Dendritic cell treated with granulocyte-macrophage colony-stimulating factor and Interleukin-4, amounts not matched to agents 40 ng/mL and 50 ng/mL, for 4 days (primary cell): ENCODE measurements at regions of chr4 and their contacts with region 1.

Region 1: DNA sequence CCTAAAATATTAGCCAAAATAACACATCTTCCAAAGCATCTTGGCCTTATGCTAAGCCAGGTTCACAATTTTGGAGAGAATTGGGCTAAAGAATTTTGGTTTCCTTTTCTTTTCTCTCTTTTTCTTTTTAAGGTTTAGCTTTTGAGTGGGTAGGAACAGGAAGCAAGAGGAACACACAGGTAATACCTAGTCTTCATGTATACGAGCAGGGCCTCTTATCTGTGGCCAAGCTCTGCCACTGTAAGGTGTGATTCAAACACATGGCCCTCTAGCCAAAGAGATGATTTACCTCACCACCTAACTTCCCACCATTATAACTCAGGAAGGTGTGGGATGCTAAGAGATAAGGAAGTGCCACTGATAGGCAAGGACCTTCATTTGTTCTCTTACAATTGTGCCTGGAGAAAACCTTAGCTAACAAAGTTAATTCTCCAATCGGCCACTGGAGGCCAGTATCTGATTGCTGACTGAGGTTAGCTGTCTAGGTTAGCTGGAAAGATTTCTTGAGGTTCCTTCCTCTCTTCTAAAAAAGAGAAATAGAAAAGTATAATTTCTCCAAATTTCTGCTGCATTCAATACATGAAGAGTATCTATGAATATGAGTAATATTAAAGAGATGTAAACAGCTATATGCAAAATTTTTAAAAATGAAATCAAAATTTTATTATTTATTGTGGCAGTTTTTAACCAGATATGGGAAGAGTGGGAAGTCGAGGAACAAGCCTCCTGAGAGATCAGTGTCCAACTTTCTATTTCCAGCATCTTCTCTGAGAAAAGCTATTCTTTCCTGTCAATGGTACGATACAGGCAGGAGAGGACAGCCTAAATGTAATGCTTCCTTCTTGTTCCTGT is 30.1 kb upstream of the BBS7 start:
- H3K4me3 Mint-ChIP-seq: no peak overlapping the region
- H3K27ac Mint-ChIP-seq: no peak overlapping the region
- H3K4me1 Mint-ChIP-seq: no peaks in the 10 kb centered on the region
- H3K27me3 Mint-ChIP-seq: peaks cover 9% of the 10 kb centered on the region

Region 2: GRCh38 chr4:121990489-121990888 is 90.1 kb after region 1 on chr4:
- intact Hi-C with region 1: no loop called
- H3K4me3 Mint-ChIP-seq: no peak overlapping the region
- H3K27ac Mint-ChIP-seq: no peak overlapping the region
- H3K4me1 Mint-ChIP-seq: no peaks in the 10 kb centered on the region
- H3K27me3 Mint-ChIP-seq: peaks cover 13% of the 10 kb centered on the region

Region 3: DNA sequence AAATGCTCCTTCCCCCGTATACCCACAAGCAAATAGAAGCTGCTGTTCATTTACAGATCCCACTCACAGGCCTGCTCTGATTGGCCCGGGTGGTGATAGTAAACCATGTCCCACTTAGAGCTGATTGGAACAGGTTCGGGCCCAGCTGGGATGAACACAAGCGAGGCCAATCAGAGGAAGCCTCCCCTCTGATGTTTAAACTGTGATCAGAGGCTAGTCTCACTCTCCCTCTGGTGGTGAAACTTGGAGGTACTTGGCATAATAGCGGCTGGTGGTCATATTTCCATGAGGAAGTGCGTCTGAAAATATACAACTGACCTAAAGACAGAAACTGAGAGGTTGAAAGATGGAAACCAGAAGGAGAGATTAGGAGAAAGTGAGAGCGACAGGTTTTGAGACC is 103.0 kb after region 1 on chr4:
- intact Hi-C with region 1: loop called (anchors 1 kb)
- H3K4me3 Mint-ChIP-seq: no peak overlapping the region
- H3K27ac Mint-ChIP-seq: no peak overlapping the region
- H3K4me1 Mint-ChIP-seq: no peaks in the 10 kb centered on the region
- H3K27me3 Mint-ChIP-seq: no peaks in the 10 kb centered on the region

Region 4: GRCh38 chr4:122309988-122310626 is 409.7 kb after region 1 on chr4:
- intact Hi-C with region 1: loop called (anchors 10 kb)
- H3K4me3 Mint-ChIP-seq: no peak overlapping the region
- H3K27ac Mint-ChIP-seq: no peak overlapping the region
- H3K4me1 Mint-ChIP-seq: peaks cover 5% of the 10 kb centered on the region
- H3K27me3 Mint-ChIP-seq: no peaks in the 10 kb centered on the region